CD14-positive monocyte (primary cell): ENCODE measurements at regions of chr12 and their contacts with region 1.

Region 1: DNA sequence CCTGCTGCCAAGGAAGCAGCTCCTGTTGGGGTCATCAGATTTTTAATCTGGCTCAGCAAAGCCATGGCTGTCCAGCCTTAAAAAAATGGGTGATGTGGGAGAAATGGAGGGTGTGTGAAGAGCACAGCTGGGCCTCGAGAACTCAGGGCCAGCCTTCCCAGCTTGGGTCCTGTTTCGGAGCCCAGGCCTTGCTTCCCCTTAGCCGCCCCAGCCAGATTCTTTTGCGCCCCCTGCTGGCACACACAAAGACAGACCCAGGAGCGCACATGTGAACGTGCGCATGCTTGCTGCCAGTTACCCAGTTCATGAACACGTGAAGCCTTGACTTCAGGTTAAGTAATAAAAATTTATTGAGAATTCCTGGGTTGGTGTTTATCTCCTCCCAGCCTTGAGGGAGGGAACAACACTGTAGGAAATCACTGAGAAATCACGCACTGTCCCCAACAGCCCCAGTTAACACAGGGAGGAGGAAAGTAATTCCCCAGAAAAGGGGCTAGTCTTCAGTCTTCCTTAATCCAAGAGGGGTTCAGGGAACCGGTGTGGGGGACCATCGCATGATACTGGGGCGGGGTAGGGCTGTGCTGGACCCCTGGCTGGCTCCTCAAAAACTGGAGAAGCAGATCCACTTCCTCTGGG is 5.3 kb downstream of the PHB2 start:
- DNase-seq: peak; percentile 78 to 90 (median 85)
- H3K4me3 ChIP-seq: no peak overlapping the region
- H3K4me3 Mint-ChIP-seq: no peak overlapping the region
- H3K27ac ChIP-seq: peak overlapping the region; percentile 30
- H3K27ac Mint-ChIP-seq: peak overlapping the region; percentile 40 to 89 (median 82)
- H3K4me1 ChIP-seq: peaks cover 57 to 66% of the 10 kb centered on the region in 2 donors
- H3K4me1 Mint-ChIP-seq: peaks cover 65% of the 10 kb centered on the region
- H3K27me3 ChIP-seq: no peaks in the 10 kb centered on the region
- H3K27me3 Mint-ChIP-seq: peaks cover 0 to 5% (median 0%) of the 10 kb centered on the region in 3 donors
- CTCF ChIP-seq: peak; percentile 88

Region 2: GRCh38 chr12:6858799-6859198 is 106.3 kb before region 1 on chr12:
- intact Hi-C with region 1: loop called in 1 of 2 experiments (anchors 5 kb)
- DNase-seq: no peak
- H3K4me3 ChIP-seq: no peak overlapping the region
- H3K4me3 Mint-ChIP-seq: no peak overlapping the region
- H3K27ac ChIP-seq: no peak overlapping the region
- H3K27ac Mint-ChIP-seq: no peak overlapping the region
- H3K4me1 ChIP-seq: no peaks in the 10 kb centered on the region
- H3K4me1 Mint-ChIP-seq: peaks cover 3% of the 10 kb centered on the region
- H3K27me3 ChIP-seq: no peaks in the 10 kb centered on the region
- H3K27me3 Mint-ChIP-seq: peaks cover 0 to 3% (median 0%) of the 10 kb centered on the region in 3 donors
- CTCF ChIP-seq: no peak

Region 3: DNA sequence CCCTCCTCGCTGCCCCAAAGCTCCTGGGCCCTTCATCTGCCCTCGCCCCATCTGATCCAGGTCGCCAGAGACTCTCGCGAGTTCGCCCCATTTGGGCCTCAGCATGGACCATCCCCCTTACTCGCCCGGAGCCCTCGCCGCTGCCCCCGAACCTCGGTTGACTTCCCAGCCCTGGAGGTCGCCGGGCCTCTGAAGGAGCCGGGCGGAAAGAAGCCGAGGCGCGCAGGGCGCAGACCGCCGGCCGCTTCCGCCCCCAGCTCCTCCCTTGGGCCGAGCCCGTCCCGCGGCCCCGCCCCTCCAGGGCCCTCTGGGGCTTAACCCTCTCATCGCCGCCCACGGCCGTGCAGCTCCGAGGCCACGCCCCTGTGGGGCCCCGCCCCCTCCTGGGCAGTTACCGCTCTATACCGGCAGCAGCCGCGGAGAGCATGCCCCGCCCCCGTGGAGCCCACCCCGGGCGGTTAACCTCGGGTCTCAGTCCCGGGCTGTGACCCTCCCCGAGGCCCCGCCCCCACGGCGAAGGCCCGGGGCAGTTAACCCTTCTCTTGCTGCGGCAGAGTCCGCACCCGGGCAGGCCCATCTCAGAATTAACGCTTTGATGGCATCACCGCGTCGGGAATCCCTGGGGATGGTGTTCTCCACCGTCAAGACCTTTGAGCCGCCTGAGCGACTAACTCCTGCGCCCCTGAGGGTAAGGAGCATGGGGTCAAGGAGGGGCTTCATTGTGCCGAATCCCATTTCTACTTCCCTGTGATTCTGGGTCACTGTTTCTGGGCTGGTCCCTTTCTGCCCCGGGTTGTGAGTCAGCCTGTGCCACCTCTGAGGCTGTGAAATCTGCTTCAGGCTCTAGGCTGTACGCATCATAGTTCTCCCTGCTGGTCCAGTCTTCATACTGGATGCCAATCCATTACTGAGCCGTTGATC is 91.8 kb before region 1 on chr12 and contains the start of gene SPSB2:
- intact Hi-C with region 1: loop called (anchors 2 to 5 kb)
- DNase-seq: peak; percentile 92 to 95 (median 93)
- H3K4me3 ChIP-seq: peak within 1 kb of the TSS; percentile 62 to 92 (median 87)
- H3K4me3 Mint-ChIP-seq: peak within 1 kb of the TSS; percentile 87 to 92
- H3K27ac ChIP-seq: peak within 1 kb of the TSS; percentile 81 to 95
- H3K27ac Mint-ChIP-seq: peak within 1 kb of the TSS; percentile 84 to 95 (median 94)
- H3K4me1 ChIP-seq: peaks cover 36 to 58% of the 10 kb centered on the region in 2 donors
- H3K4me1 Mint-ChIP-seq: peaks cover 57% of the 10 kb centered on the region
- H3K27me3 ChIP-seq: no peaks in the 10 kb centered on the region
- H3K27me3 Mint-ChIP-seq: peaks cover 0 to 3% (median 0%) of the 10 kb centered on the region in 3 donors
- CTCF ChIP-seq: no peak
- polyA plus RNA-seq, gene SPSB2: 4.7 to 6.9 (median 6.6) TPM

Region 4: DNA sequence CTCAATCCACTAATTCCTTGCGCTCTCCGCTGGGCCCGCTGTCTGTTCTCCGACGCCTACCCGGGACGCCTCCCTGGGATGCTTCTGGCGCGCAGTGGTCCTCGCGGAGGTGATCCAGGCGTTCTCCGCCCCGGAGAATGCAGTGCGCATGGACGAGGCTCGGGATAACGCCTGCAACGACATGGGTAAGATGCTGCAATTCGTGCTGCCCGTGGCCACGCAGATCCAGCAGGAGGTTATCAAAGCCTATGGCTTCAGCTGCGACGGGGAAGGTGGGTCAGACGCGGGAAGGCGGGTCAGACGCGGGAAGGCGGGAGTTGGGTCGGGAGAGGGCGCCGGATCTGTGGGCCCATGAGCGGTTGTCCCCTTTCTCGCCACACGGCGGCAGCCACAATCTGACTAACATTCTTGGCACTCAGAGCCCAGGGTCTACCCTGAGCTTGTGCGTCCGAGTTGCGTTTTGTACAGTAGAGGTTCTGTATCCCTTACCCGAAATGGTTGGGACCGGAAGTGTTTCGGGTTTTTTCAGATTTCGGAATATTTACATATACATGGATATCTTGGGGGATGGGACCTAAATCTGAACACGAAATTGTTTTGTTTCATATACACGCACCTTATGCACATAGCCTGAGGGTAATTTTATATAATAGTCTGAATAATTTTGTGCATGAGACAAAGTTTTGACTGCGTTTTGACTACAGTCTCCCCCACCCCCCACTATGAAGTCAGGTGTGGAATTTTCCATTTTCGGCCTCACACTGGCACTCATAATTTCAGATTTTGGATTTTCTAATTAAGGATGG is 20.6 kb before region 1 on chr12:
- intact Hi-C with region 1: loop called (anchors 1 to 2 kb)
- DNase-seq: peak; percentile 82 to 90 (median 90)
- H3K4me3 ChIP-seq: peak overlapping the region; percentile 3 to 76 (median 48)
- H3K4me3 Mint-ChIP-seq: peak overlapping the region; percentile 82 to 91
- H3K27ac ChIP-seq: peak overlapping the region; percentile 76 to 89
- H3K27ac Mint-ChIP-seq: peak overlapping the region; percentile 94 to 99 (median 98)
- H3K4me1 ChIP-seq: peaks cover 62 to 68% of the 10 kb centered on the region in 2 donors
- H3K4me1 Mint-ChIP-seq: peaks cover 65% of the 10 kb centered on the region
- H3K27me3 ChIP-seq: no peaks in the 10 kb centered on the region
- H3K27me3 Mint-ChIP-seq: peaks cover 0 to 2% (median 0%) of the 10 kb centered on the region in 3 donors
- CTCF ChIP-seq: peak; percentile 81

Region 5: DNA sequence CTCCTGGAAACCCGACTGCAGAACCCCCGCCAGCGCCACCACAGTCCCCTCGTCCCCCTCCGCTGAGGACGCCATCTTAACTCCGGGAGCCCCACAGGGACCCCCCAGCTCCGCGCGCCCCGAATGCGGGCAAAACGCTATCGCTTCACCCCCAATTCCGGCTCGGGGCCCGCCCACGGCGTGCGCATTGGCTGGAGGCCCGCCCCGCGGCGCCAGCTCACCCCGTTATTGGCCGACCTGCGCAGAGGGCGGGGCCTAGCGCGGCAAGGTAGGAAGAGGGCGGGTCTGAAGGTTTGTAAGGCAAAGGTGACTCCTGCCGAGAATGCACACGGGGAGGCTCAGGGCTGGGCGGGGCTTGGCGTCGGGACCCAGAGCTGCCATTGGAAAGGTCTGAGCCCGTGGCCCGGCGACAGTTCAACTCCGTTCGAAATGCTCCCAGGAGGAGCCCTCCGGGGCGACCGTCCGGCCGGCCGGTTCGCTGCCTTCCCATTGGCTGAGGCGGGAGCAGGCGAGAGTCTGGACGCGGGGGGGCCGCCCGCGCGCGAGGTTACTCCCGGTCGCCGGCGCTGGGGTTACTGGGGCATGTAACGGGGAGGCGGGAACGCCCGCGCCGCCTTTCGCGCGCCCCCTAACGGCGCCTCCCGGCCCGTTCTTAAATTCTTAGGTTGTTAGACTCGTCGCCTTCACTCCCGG is 53.4 kb after region 1 on chr12 and contains the start of gene LPCAT3:
- intact Hi-C with region 1: loop called (anchors 5 kb)
- DNase-seq: peak; percentile 91 to 93 (median 92)
- H3K4me3 ChIP-seq: peak within 1 kb of the TSS; percentile 72 to 99 (median 85)
- H3K4me3 Mint-ChIP-seq: peak within 1 kb of the TSS; percentile 96 to 97
- H3K27ac ChIP-seq: peak within 1 kb of the TSS; percentile 73 to 86
- H3K27ac Mint-ChIP-seq: peak within 1 kb of the TSS; percentile 90 to 98 (median 96)
- H3K4me1 ChIP-seq: peaks cover 24 to 40% of the 10 kb centered on the region in 2 donors
- H3K4me1 Mint-ChIP-seq: peaks cover 45% of the 10 kb centered on the region
- H3K27me3 ChIP-seq: no peaks in the 10 kb centered on the region
- H3K27me3 Mint-ChIP-seq: peaks cover 0 to 2% (median 0%) of the 10 kb centered on the region in 3 donors
- CTCF ChIP-seq: peak; percentile 87
- polyA plus RNA-seq, gene LPCAT3: 50.9 to 62.7 (median 54.1) TPM

Region 6: GRCh38 chr12:7042842-7043241 is 77.7 kb after region 1 on chr12:
- intact Hi-C with region 1: no loop called
- DNase-seq: peak; percentile 4 to 13 (median 12)
- H3K4me3 ChIP-seq: no peak overlapping the region
- H3K4me3 Mint-ChIP-seq: no peak overlapping the region
- H3K27ac ChIP-seq: no peak overlapping the region
- H3K27ac Mint-ChIP-seq: no peak overlapping the region
- H3K4me1 ChIP-seq: peaks cover 9 to 11% of the 10 kb centered on the region in 2 donors
- H3K4me1 Mint-ChIP-seq: peaks cover 14% of the 10 kb centered on the region
- H3K27me3 ChIP-seq: no peaks in the 10 kb centered on the region
- H3K27me3 Mint-ChIP-seq: peaks cover 0 to 9% (median 5%) of the 10 kb centered on the region in 3 donors
- CTCF ChIP-seq: peak; percentile 43

Region 7: DNA sequence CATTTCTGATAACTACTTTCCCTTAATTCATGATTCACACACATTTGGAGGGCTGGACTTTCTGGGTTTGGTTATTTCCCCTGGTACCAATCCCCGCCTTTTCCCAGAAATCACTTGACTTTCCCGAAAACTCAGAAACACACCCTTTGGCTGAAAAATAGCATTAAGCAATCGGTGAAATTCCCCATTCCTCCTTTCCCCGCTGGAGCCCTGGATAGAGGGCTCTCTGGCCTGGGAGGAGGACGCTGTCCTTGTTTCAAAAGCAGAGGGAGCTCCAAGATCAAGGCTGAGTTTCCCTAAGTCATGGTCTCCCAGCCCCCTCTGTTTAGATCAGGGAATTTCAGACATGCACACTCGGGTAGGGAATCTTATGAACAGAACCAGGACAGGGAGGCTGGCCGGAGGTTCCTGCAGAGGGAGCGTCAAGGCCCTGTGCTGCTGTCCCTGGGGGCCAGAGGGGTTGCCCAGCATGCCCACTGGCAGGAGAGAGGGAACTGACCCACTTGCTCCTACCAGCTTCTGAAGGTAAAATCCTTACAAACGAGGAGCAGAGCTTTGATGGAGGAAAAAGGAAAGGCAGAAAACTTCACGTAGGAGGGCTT is 95.3 kb after region 1 on chr12 and contains the start of gene C1S:
- intact Hi-C with region 1: no loop called
- DNase-seq: no peak
- H3K4me3 ChIP-seq: no peak within 1 kb of the TSS
- H3K4me3 Mint-ChIP-seq: no peak within 1 kb of the TSS
- H3K27ac ChIP-seq: no peak within 1 kb of the TSS
- H3K27ac Mint-ChIP-seq: peak within 1 kb of the TSS in 1 of 7 donors; percentile 24
- H3K4me1 ChIP-seq: peaks cover 0 to 9% of the 10 kb centered on the region in 2 donors
- H3K4me1 Mint-ChIP-seq: peaks cover 11% of the 10 kb centered on the region
- H3K27me3 ChIP-seq: no peaks in the 10 kb centered on the region
- H3K27me3 Mint-ChIP-seq: peaks cover 0 to 8% (median 6%) of the 10 kb centered on the region in 3 donors
- CTCF ChIP-seq: no peak
- polyA plus RNA-seq, gene C1S: 1.00 TPM in 1 of 3 donors, not detected in the others